Activated CD4-positive, alpha-beta memory T cell treated with anti-CD3 and anti-CD28 coated beads, Interleukin-2, amount 10 ng/mL, durations not matched to agents 7 days and 5 days (primary cell): ENCODE measurements at regions of chr3 and their contacts with region 1.

Region 1: DNA sequence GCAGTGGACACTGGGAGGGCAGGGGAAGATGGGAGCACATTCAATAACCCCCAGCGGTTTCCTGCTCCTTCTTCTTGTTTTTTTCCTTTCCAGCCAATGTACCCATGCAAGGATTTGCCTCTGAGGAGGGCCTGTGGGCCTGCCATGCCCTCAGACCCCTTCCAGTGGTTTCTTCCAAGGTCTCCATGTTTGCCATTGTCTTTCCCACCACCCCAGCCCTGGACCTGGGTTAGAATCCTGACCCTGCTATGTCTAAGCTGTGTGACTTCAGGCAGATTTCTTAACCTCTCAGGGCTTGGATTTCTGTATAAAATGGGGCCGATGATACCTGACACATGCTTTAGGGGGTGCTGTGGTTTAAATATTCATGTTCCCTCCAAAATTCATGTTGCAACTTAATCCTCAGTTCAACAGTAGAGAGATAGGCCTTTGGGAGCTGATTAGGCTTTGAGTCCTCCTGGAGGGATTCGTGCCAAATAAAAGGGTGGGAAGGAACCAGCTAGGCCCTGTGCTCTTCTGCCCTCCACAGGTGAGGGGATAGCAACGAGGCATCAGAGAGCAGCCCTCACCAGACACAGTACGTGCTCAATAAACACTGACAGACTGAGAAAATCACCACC is 46.3 kb upstream of the FLNB start:
- DNase-seq: no peak
- H3K4me3 Mint-ChIP-seq: no peak overlapping the region
- H3K27ac Mint-ChIP-seq: no peak overlapping the region
- H3K4me1 Mint-ChIP-seq: peaks cover 11% of the 10 kb centered on the region
- H3K27me3 Mint-ChIP-seq: no peaks in the 10 kb centered on the region

Region 2: DNA sequence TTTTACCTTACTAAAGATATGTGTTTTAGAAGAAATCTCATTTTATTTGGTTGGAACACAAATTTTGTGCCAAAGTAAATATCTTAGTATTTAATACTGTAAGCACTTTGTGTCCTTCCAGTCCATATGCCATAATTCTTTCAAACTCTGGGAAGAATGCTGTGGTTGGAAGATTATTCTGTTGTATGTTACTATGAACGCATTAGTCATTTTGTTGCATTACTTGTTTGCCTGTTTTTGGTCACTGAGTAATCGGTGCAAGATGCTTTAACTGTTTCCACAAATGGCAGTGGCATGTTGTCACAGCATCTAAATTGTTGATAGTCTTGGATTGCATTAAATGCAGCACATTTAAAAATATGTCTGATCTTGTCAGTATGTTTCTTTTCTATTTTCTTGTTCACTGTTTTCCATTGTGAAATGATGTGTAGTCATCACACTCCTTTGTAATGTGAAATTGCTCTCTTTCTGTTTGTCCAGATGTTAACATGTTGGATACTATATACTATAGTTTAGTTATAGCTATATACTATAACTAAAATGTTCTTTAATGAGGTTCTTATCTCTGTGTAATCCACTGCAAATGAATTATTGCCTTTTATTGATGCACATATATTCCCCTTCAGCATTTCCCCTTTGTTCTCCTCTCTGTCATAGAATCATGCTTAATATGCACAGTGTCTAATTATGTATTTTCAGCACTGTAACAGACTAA is 43.7 kb before region 1 on chr3:
- CTCF ChIA-PET with region 1: no interaction called
- POLR2A ChIA-PET with region 1: no interaction called
- DNase-seq: no peak
- H3K4me3 Mint-ChIP-seq: no peak overlapping the region
- H3K27ac Mint-ChIP-seq: no peak overlapping the region
- H3K4me1 Mint-ChIP-seq: no peaks in the 10 kb centered on the region
- H3K27me3 Mint-ChIP-seq: no peaks in the 10 kb centered on the region

Region 3: GRCh38 chr3:57972531-57973111 is 10.7 kb after region 1 on chr3:
- CTCF ChIA-PET with region 1: interaction called, 14 read pairs
- POLR2A ChIA-PET with region 1: no interaction called
- DNase-seq: no peak
- H3K4me3 Mint-ChIP-seq: no peak overlapping the region
- H3K27ac Mint-ChIP-seq: no peak overlapping the region
- H3K4me1 Mint-ChIP-seq: peaks cover 10% of the 10 kb centered on the region
- H3K27me3 Mint-ChIP-seq: no peaks in the 10 kb centered on the region

Region 4: DNA sequence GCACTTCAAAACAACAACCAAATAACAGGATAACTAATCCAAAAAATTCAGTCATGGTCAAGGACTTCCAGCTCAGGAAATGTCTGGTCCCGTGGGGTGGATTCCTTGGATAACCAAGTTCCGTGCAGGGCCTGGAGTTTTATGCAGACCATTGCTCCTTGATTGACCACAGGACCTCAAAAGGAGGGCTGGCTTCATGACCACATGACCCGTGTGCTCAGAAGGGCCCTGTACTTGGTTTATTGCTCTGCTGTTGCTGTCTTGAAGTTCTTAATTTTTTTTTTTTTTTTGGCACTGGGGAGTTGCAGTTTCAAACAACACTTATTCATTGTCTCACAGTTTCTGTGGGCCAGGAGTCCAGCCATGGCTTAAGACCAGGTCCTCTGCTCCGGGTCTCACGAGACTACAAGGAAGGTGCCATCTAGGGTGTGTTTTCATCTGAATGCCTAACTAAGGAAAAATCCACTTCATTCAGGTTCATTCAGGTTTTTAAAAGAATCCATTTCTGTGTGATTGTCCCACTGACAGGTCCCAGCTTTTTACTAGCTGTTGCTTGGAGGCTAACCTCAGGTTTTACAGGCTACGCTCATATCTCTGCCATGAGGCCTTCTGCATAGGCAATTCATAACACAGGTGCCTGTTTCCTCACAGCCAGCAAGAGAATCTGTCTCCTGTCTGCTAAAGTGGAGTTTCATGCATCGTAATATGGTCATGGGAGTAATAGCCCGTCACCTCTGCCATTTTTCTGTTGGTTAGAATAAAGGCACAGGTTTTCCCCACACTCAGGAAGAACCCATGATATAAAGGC is 111.6 kb after region 1 on chr3:
- CTCF ChIA-PET with region 1: no interaction called
- POLR2A ChIA-PET with region 1: no interaction called
- DNase-seq: no peak
- H3K4me3 Mint-ChIP-seq: no peak overlapping the region
- H3K27ac Mint-ChIP-seq: no peak overlapping the region
- H3K4me1 Mint-ChIP-seq: peaks cover 11% of the 10 kb centered on the region
- H3K27me3 Mint-ChIP-seq: no peaks in the 10 kb centered on the region